A549 (cell line): ENCODE measurements at regions of chr11 and their contacts with region 1.

Region 1: DNA sequence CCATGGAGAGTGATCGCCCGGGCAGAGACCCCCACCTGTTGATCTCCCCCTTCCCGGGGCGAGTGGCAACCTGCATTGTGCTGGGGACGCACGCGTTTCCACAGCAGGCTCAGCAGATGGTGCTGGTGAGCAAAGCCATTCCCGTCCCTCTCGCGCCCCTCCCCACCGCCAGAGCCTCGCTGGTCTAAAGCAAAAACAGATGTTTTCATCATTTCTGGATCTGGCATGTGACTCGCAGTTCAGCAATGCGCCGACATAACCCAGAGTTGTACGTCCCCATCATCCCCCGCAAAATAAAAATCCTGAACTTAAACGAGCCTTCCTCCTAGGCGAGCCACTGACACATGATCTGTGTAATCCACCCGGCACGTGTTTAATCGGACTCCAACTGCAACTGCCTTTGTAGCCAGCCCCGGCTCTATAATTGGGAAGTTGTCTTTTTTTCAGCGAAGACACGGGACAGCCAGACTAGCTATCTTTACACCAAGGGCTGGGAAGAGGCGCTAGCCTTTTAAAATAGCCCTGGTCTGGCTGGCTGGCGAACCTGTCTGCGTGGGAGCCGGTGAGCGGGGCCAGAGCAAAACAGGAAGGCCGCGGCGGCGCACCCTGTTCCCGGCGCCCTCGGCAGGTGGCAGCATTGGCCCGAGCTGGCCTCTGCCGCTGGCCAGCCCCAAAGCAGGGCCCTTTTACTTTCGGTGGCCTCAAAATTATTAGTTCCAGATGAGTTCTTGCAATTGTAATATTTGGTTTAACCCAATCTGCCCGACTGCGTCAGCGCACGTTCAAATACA is 203.0 kb upstream of the SORL1-AS1 start:
- DNase-seq: peak; percentile 72 to 73
- ATAC-seq: peak; percentile 93 to 98
- H3K4me3 ChIP-seq: peak overlapping the region; percentile 48
- H3K27ac ChIP-seq: peak overlapping the region; percentile 79 to 87
- H3K4me1 ChIP-seq: 0 out of 3 replicates have a peak, but pooled peaks cover 4% of the 10 kb centered on the region
- CTCF ChIP-seq: peak; percentile 57
- EP300 ChIP-seq: no peak
- POLR2A ChIP-seq: no peak
- RAD21 ChIP-seq: peak; percentile 79 to 91

Region 2: DNA sequence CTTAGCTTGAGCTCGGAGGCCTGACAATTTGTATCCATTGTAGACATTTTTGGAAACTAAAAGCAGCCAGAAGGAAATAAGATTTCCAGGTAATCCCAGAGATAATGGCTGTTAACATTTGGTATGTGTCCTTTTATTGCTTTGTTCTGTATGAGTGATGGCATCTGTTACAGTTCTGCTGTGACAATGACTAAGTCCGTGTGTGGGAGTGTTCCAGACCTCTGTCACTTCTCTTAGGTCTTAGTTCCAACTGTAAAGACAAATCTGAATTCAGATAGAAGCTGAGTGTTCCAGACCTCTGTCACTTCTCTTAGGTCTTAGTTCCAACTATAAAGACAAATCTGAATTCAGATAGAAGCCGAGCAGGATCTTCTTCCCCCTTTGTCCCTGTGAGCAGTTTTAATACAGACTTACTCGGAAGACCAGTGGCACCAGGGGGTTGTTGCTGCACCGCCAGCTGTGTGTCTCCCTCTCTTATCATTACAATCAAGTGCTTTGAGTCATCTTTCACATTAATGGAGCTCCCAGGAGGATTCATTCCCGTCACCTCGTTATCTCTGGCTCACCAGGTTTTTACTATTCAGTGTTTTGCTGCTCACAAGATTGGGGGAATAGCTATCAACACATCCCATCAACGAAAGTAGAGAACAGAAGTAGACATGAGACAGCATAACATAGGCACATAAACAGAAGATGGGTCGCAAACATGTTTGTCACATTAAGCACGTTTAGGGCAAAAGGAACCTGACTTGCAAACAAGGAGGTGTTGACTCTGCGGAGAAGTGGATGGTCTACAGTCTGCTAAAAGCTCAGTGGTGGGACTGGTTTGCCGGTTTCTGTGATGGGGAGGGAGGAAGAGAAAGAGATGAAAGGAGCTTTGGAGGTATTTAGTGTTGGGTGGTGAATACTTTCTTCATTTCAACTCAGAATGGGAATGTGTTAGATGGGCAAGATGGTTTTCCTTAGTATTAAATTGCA is 11.9 kb before region 1 on chr11:
- CTCF ChIA-PET with region 1: interaction called, 27 read pairs
- POLR2A ChIA-PET with region 1: no interaction called
- DNase-seq: no peak
- ATAC-seq: no peak
- H3K4me3 ChIP-seq: no peak overlapping the region
- H3K27ac ChIP-seq: no peak overlapping the region
- H3K4me1 ChIP-seq: no peaks in the 10 kb centered on the region
- CTCF ChIP-seq: no peak
- EP300 ChIP-seq: no peak
- POLR2A ChIP-seq: no peak
- RAD21 ChIP-seq: no peak